Heart right ventricle (tissue), 16 donors: ENCODE measurements at regions of chrX and their contacts with region 1.

Region 1: DNA sequence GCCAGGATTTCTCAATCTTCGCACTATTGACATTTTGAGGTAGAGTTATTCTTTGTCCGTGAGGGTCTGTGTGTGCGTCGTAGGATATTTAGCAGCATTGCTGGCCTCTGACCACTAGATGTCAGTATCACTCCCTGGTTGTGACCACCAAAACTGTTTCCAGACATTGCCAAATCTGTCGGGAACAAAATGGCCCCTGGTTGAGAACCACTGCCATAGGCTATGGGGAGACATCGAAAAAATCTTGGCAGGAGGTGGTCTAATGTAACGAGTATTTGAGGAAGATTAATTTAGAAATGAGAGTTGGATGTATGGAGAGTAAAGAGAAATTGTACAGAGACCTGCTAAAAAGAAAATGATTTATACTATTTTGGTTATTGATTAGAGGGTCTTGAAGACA is 108.4 kb downstream of the DOCK11 start:
- DNase-seq: peak in 1 of 2 donors; percentile 33
- ATAC-seq: peak in 3 of 8 donors; percentile 31 to 76 (median 48)
- H3K4me3 ChIP-seq: no peak overlapping the region
- H3K27ac ChIP-seq: no peak overlapping the region
- H3K4me1 ChIP-seq: peaks cover 0 to 4% (median 0%) of the 10 kb centered on the region in 9 donors
- H3K27me3 ChIP-seq: peaks cover 0 to 28% (median 0%) of the 10 kb centered on the region in 7 donors
- CTCF ChIP-seq: peak; percentile 43 to 82 (median 71)

Region 2: DNA sequence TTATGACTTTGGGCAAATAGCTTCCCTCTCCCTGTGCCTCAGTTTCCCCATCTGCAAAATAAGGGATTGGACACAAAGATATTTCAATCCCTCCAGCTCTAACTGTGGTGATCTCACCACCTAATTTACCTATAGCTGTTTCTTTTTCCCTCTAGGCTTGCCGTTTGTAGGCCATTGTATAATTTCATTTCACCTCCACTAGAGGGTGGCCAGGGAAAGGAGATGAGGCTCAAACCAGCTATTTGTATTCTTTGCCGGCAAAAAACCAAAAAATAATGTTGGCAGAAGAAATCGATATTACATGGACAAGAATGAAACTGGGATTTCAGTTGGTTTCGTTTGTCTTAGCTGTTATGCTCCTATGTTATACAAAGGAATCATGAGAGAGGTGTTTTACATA is 144.5 kb before region 1 on chrX:
- intact Hi-C with region 1: loop called in 8 of 10 experiments (anchors 2 to 10 kb)
- DNase-seq: no peak
- ATAC-seq: no peak
- H3K4me3 ChIP-seq: no peak overlapping the region
- H3K27ac ChIP-seq: no peak overlapping the region
- H3K4me1 ChIP-seq: no peaks in the 10 kb centered on the region
- H3K27me3 ChIP-seq: no peaks in the 10 kb centered on the region
- CTCF ChIP-seq: peak in 8 of 9 donors; percentile 4 to 53 (median 50)

Region 3: DNA sequence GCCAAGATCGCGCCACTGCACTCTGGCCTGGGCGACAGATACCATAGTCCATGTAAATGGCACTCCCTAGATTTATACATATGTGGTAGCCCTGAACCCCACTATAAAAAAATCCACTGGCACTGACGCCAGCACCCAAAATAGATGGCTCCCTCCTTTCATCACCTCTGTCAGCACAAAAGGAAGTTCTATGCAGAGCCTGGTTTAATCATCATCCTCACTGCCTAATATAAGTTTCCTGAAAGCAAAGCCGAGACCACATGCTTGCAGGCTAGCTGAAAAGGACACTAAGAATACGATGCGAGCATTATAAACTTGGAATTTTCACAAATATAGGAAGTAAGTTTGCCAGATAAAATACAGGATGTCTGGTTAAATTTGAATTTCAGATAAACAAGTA is 135.9 kb before region 1 on chrX:
- intact Hi-C with region 1: loop called in 2 of 10 experiments (anchors 5 to 10 kb)
- DNase-seq: no peak
- ATAC-seq: peak in 1 of 8 donors; percentile 63
- H3K4me3 ChIP-seq: no peak overlapping the region
- H3K27ac ChIP-seq: no peak overlapping the region
- H3K4me1 ChIP-seq: no peaks in the 10 kb centered on the region
- H3K27me3 ChIP-seq: no peaks in the 10 kb centered on the region
- CTCF ChIP-seq: no peak

Region 4: DNA sequence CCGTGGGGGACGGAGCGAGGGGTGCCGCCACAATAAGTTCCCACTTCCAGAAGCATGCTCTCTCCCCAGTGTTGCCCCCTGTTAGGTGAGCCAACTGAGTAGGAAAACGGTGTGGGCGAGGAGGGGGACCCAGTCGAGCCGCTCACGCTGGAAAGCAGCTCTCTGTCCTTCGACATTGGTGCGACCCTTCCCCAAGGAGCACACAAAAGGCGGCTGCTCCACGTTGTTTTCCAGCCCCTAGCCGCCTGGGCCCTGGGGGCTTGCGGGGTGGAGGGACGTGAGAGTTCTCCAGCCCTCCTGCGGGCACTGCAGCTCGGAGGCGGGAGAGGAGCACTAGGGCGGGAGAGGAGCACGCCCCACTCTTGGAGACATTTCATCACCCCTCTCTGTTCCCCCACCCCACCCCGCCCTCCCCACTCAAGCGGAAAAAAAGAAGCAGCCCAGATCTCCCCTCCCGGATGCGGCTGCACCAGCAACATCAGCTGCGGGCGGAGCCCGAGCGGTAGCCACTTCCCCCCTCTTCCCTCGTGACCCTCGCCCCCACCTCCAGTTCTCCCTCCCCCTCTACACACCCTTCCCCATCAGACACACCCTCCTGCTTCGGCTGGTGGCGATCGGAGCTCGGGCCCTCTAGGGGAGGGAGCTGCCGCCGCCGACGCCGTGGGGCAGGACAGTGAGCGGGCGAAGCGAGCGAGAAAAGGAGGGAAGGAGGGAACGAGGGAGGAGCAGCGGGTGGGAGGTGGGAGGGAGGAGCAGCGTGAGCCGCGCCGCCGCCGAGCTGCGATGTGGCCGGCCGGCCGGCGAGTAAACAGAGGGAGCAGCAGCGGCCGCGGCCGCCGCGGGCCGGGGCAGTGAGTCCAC is 108.7 kb before region 1 on chrX and contains the start of gene DOCK11:
- intact Hi-C with region 1: loop called in 1 of 10 experiments (anchors 10 kb)
- DNase-seq: peak; percentile 73 to 77
- ATAC-seq: peak; percentile 89 to 93 (median 91)
- H3K4me3 ChIP-seq: peak within 1 kb of the TSS; percentile 38 to 72 (median 62)
- H3K27ac ChIP-seq: peak within 1 kb of the TSS in 9 of 10 donors; percentile 58 to 92 (median 71)
- H3K4me1 ChIP-seq: peaks cover 0 to 17% (median 0%) of the 10 kb centered on the region in 9 donors
- H3K27me3 ChIP-seq: peaks cover 0 to 38% (median 0%) of the 10 kb centered on the region in 7 donors
- CTCF ChIP-seq: no peak
- total RNA-seq, gene DOCK11: 1.3 to 9.4 (median 3.0) TPM

Region 5: GRCh38 chrX:118566359-118566758 is 37.6 kb before region 1 on chrX:
- intact Hi-C with region 1: no loop called
- DNase-seq: no peak
- ATAC-seq: no peak
- H3K4me3 ChIP-seq: no peak overlapping the region
- H3K27ac ChIP-seq: no peak overlapping the region
- H3K4me1 ChIP-seq: no peaks in the 10 kb centered on the region
- H3K27me3 ChIP-seq: no peaks in the 10 kb centered on the region
- CTCF ChIP-seq: no peak